Tibial artery (tissue), 4 donors: ENCODE measurements at regions of chr10 and their contacts with region 1.

Region 1: DNA sequence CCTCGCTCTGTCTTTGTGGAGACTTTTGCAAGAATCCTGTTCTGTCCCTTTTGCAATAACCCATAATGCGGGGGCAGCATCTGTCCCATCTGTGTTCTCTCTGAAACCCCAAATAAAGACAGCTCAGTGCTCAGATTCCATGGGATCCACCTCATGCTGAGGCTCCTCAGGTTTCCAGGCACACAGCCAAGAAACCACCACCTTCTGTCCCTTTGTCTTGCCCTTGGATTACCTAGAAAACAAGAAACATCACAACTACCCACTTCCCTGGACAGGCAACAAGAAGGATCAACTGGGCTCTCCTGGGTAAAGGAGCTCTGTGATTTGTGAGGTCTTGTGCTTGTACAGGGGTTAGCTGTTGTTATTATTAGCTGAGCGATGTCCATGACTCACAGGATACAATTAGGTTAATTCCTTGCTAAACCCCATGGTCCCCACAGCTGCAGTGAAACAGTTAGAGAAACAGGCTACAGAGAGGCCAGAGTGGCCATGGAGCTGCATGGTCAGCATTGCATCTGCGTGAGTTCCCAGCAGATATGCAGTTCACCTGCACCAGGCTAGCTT is 50.2 kb downstream of the CXCL12 start:
- DNase-seq: no peak
- H3K4me3 ChIP-seq: no peak overlapping the region
- H3K27ac ChIP-seq: no peak overlapping the region
- H3K4me1 ChIP-seq: no peaks in the 10 kb centered on the region
- H3K27me3 ChIP-seq: no peaks in the 10 kb centered on the region
- CTCF ChIP-seq: no peak

Region 2: DNA sequence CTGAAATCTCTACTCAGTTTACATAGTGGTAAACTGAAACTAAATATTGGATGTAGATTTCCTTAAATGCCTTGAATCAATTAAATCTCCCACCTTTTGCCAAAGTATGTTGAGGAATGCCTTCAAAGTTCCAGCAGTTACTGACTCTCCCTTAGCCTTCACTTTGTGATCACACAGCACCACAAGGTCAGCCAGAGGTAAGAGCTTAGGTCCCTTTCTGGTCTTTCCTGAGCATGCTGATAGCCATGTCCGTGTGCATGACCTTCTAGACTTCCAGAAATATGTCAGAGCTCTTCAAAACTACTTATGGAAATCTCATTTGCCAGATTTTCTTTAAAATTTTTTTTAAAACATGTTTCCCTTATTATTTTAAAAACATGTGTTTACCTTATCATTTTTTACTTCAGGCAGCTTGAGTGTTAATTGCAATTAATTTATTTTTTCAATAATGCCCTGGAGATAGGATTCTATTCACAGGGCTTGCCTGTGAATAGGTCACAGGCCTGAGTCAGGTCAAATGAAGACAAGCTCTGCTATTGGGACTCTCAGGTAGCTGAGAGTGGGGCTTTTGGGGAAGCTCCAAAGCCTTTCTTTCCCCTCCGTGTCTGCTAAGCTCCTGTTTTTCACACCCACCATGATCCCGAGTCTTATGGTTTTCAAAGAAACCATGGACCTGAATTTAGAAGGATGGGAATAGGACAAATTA is 170.3 kb before region 1 on chr10:
- intact Hi-C with region 1: no loop called
- DNase-seq: no peak
- H3K4me3 ChIP-seq: no peak overlapping the region
- H3K27ac ChIP-seq: no peak overlapping the region
- H3K4me1 ChIP-seq: no peaks in the 10 kb centered on the region
- H3K27me3 ChIP-seq: no peaks in the 10 kb centered on the region
- CTCF ChIP-seq: no peak

Region 3: GRCh38 chr10:44581996-44582395 is 247.3 kb after region 1 on chr10:
- intact Hi-C with region 1: loop called (anchors 10 kb)
- DNase-seq: no peak
- H3K4me3 ChIP-seq: no peak overlapping the region
- H3K27ac ChIP-seq: no peak overlapping the region
- H3K4me1 ChIP-seq: no peaks in the 10 kb centered on the region
- H3K27me3 ChIP-seq: no peaks in the 10 kb centered on the region
- CTCF ChIP-seq: no peak

Region 4: DNA sequence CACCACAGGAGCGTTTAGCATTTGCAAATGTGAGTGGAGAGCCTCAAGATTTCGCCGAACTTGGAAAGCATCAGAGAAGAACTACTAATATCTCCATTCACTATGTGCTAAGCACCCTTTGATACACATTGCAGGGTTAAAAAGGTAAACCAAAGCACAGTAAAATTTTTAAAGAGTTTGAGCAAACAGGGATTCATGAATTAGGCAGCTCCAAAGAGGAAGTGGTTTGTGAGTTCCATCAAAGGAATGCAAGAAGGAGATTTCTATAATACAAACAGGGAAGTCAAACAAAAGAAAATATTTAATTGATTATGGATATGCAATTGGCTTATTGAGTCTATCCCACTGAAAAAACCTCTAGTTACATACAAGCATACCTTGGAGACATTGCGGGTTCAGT is 495.3 kb after region 1 on chr10:
- intact Hi-C with region 1: no loop called
- DNase-seq: no peak
- H3K4me3 ChIP-seq: no peak overlapping the region
- H3K27ac ChIP-seq: no peak overlapping the region
- H3K4me1 ChIP-seq: peaks cover 0 to 2% (median 0%) of the 10 kb centered on the region in 4 donors
- H3K27me3 ChIP-seq: no peaks in the 10 kb centered on the region
- CTCF ChIP-seq: no peak